K562 (cell line): ENCODE measurements at regions of chr9 and their contacts with region 1.

Region 1: DNA sequence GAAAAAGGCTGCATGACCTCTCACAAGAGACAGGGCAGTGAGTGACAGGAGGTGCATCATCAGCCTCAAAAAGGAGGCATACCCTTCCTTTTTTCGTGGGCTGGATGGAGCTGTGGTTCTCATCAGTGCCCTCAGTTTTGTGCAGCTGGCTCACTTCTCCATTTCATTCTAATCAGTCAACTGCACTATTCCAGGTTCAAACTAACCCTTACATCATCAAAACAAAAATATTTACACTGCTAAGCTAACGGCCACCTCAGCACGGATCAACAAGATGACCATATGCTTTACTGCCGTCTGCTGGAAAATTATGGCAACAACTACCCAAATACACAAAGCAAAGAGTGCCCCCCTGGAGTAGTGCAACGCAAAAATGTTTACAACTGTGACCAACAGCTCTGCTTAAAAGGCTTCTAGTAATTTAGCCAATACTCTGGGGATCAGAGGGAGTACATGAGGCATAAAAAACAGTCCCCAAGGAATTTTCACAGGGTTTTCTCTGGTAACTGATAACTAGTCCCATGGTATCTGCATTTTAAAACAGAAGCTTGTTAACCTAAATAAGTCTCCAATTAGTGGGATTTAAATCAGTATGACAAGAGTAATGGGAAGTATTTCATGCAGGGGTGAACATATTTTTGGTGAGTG is 10.8 kb downstream of the KCNV2 start:
- DNase-seq: peak; percentile 19 to 61 (median 35)
- ATAC-seq: peak; percentile 96
- H3K4me3 ChIP-seq: no peak overlapping the region
- H3K27ac ChIP-seq: peak overlapping the region; percentile 17; the same call in 1 of the 3 replicates
- H3K4me1 ChIP-seq: peaks cover 0 to 4% of the 10 kb centered on the region in 2 experiments; a peak in 2 of 5 replicates
- H3K27me3 ChIP-seq: no peaks in the 10 kb centered on the region
- CTCF ChIP-seq: peak; percentile 76 to 94 (median 91)
- EP300 ChIP-seq: no peak
- POLR2A ChIP-seq: no peak
- RAD21 ChIP-seq: peak; percentile 74 to 77

Region 2: GRCh38 chr9:2178082-2178734 is 549.9 kb before region 1 on chr9:
- CTCF ChIA-PET with region 1: no interaction called
- POLR2A ChIA-PET with region 1: no interaction called
- in situ Hi-C with region 1: no loop called
- intact Hi-C with region 1: no loop called
- DNase-seq: no peak
- ATAC-seq: no peak
- H3K4me3 ChIP-seq: no peak overlapping the region
- H3K27ac ChIP-seq: no peak overlapping the region
- H3K4me1 ChIP-seq: no peaks in the 10 kb centered on the region
- H3K27me3 ChIP-seq: no peaks in the 10 kb centered on the region
- CTCF ChIP-seq: no peak
- EP300 ChIP-seq: no peak
- POLR2A ChIP-seq: no peak
- RAD21 ChIP-seq: no peak

Region 3: DNA sequence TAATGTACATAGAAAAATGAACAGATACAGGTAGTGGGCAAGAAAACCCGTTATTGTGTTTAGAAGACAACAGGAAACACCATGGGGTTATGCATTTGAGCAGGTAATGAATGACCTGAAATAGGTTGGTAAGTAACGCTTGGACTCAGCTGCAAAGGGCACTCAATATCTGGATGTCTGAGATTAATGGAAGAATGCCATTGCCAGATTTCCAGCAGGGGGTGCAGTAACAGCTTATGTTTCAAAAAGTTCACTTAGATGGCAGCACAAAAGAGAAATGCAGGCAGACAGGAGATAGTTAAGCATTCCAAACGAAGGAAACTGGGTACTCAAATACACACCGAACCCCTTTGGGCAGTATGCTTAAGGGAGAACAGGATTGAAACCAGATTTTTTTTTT is 392.0 kb before region 1 on chr9:
- CTCF ChIA-PET with region 1: no interaction called
- POLR2A ChIA-PET with region 1: no interaction called
- in situ Hi-C with region 1: no loop called
- intact Hi-C with region 1: loop called (anchors 5 kb)
- DNase-seq: peak in 1 of 4 experiments; percentile 10
- ATAC-seq: no peak
- H3K4me3 ChIP-seq: no peak overlapping the region
- H3K27ac ChIP-seq: no peak overlapping the region
- H3K4me1 ChIP-seq: no peaks in the 10 kb centered on the region
- H3K27me3 ChIP-seq: no peaks in the 10 kb centered on the region
- CTCF ChIP-seq: peak; percentile 15 to 25 (median 22); a peak in 3 of 6 replicates
- EP300 ChIP-seq: no peak
- POLR2A ChIP-seq: no peak
- RAD21 ChIP-seq: peak; percentile 24 to 37

Region 4: GRCh38 chr9:2709645-2710101 is 18.4 kb before region 1 on chr9:
- CTCF ChIA-PET with region 1: no interaction called
- POLR2A ChIA-PET with region 1: no interaction called
- in situ Hi-C with region 1: no loop called
- intact Hi-C with region 1: no loop called
- DNase-seq: no peak
- ATAC-seq: no peak
- H3K4me3 ChIP-seq: no peak overlapping the region
- H3K27ac ChIP-seq: no peak overlapping the region
- H3K4me1 ChIP-seq: no peaks in the 10 kb centered on the region
- H3K27me3 ChIP-seq: no peaks in the 10 kb centered on the region
- CTCF ChIP-seq: no peak
- EP300 ChIP-seq: no peak
- POLR2A ChIP-seq: no peak
- RAD21 ChIP-seq: no peak

Region 5: DNA sequence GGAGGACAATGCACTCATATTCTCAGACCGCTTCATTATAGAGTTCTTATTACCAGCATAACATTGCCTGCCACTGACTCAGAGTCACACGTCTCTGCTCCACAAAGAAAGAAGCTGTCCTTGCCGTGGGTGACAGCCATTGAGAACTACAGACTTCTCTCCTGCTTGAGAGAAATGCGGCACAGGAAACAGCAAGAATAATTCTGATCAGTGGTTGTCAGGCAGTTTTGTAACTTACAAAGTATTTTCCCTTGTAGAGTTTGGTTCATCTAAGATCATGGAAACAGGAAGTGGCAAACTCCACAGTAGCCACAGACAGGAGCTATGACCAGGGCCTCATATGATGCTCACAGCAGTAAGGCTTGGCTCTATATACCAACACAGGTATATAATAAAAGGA is 36.3 kb after region 1 on chr9:
- CTCF ChIA-PET with region 1: no interaction called
- POLR2A ChIA-PET with region 1: no interaction called
- in situ Hi-C with region 1: no loop called
- intact Hi-C with region 1: no loop called
- DNase-seq: no peak
- ATAC-seq: no peak
- H3K4me3 ChIP-seq: no peak overlapping the region
- H3K27ac ChIP-seq: no peak overlapping the region
- H3K4me1 ChIP-seq: no peaks in the 10 kb centered on the region
- H3K27me3 ChIP-seq: no peaks in the 10 kb centered on the region
- CTCF ChIP-seq: no peak
- EP300 ChIP-seq: no peak
- POLR2A ChIP-seq: no peak
- RAD21 ChIP-seq: no peak